Activated T-helper 1 cell treated with anti-CD3 and anti-CD28 coated beads, Interleukin-12 subunit alpha, Interleukin-12 subunit beta, Interleukin-2, Interleukin-4 antibody, amounts not matched to agents 30 ng/mL and 10 ng/mL and 1 ng/mL, durations not matched to agents 14 hours and 24 hours and 36 hours (primary cell): ENCODE measurements at regions of chr3 and their contacts with region 1.

Region 1: DNA sequence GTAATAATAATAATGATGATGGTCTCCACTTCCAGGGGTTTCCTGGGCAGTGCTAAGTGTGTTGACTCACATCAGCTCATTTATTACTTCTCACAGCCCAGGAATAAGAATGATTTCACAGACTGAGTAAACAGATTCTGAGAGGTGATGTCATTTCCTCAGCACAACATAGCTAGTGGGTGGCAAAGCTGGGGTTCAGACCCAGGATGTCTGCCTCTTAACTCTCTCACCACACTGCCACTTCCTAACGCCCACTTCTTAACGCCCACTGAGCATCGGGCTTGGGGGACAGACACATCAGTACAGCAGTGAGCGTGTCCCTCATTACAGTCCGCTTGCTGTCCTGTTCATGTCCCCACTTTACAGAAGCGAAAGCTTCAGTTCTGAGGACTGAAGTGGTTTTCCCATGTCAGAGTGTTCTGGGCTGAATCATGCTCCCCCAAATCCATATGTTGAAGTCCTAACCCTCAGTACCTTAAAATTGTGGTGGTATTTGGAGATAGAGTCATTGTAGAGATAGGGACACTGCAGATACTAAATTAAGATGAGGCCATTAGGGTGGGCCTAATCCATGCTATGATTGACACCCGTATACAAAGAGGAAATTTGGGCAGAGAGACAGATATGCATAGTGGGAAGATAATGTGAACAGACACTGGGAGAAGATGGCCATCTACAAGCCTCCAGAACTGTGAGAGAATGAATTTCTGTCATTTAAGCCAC is 68.0 kb downstream of the ATP2B2 start:
- DNase-seq: peak; percentile 58
- H3K4me3 Mint-ChIP-seq: peak overlapping the region; percentile 32
- H3K27ac Mint-ChIP-seq: peak overlapping the region; percentile 82
- H3K4me1 Mint-ChIP-seq: peaks cover 29% of the 10 kb centered on the region
- H3K27me3 Mint-ChIP-seq: no peaks in the 10 kb centered on the region

Region 2: GRCh38 chr3:10008588-10009344 is 428.7 kb before region 1 on chr3:
- intact Hi-C with region 1: no loop called
- DNase-seq: peak; percentile 80
- H3K4me3 Mint-ChIP-seq: peak overlapping the region; percentile 55
- H3K27ac Mint-ChIP-seq: no peak overlapping the region
- H3K4me1 Mint-ChIP-seq: peaks cover 29% of the 10 kb centered on the region
- H3K27me3 Mint-ChIP-seq: peaks cover 4% of the 10 kb centered on the region

Region 3: GRCh38 chr3:10366651-10367101 is 70.8 kb before region 1 on chr3:
- intact Hi-C with region 1: loop called (anchors 2 kb)
- DNase-seq: peak; percentile 15
- H3K4me3 Mint-ChIP-seq: no peak overlapping the region
- H3K27ac Mint-ChIP-seq: peak overlapping the region; percentile 66
- H3K4me1 Mint-ChIP-seq: peaks cover 27% of the 10 kb centered on the region
- H3K27me3 Mint-ChIP-seq: peaks cover 5% of the 10 kb centered on the region